GM12878 (cell line): ENCODE measurements at regions of chr19 and their contacts with region 1.

Region 1: GRCh38 chr19:13794757-13795589 is at the start of gene ZSWIM4:
- DNase-seq: peak; percentile 95
- ATAC-seq: peak; percentile 97
- H3K4me3 ChIP-seq: peak within 1 kb of the TSS; percentile 75
- H3K27ac ChIP-seq: peak within 1 kb of the TSS; percentile 84
- H3K4me1 ChIP-seq: peaks cover 16% of the 10 kb centered on the region
- H3K27me3 ChIP-seq: no peaks in the 10 kb centered on the region
- CTCF ChIP-seq: no peak
- EP300 ChIP-seq: no peak
- POLR2A ChIP-seq: peak; percentile 48
- RAD21 ChIP-seq: no peak
- polyA plus RNA-seq, gene ZSWIM4: not detected

Region 2: GRCh38 chr19:13784731-13785452 is 10.1 kb before region 1 on chr19:
- CTCF ChIA-PET with region 1: interaction called, 19 read pairs
- POLR2A ChIA-PET with region 1: interaction called, 7 read pairs
- RAD21 ChIA-PET with region 1: interaction called, 6 read pairs
- SMC1A ChIA-PET with region 1: interaction called, 27 read pairs
- in situ Hi-C with region 1: no loop called
- intact Hi-C with region 1: no loop called
- DNase-seq: no peak
- ATAC-seq: peak; percentile 91
- H3K4me3 ChIP-seq: no peak overlapping the region
- H3K27ac ChIP-seq: no peak overlapping the region
- H3K4me1 ChIP-seq: peaks cover 26% of the 10 kb centered on the region
- H3K27me3 ChIP-seq: no peaks in the 10 kb centered on the region
- CTCF ChIP-seq: peak; percentile 47 to 79 (median 74)
- EP300 ChIP-seq: no peak
- POLR2A ChIP-seq: no peak
- RAD21 ChIP-seq: peak; percentile 76

Region 3: DNA sequence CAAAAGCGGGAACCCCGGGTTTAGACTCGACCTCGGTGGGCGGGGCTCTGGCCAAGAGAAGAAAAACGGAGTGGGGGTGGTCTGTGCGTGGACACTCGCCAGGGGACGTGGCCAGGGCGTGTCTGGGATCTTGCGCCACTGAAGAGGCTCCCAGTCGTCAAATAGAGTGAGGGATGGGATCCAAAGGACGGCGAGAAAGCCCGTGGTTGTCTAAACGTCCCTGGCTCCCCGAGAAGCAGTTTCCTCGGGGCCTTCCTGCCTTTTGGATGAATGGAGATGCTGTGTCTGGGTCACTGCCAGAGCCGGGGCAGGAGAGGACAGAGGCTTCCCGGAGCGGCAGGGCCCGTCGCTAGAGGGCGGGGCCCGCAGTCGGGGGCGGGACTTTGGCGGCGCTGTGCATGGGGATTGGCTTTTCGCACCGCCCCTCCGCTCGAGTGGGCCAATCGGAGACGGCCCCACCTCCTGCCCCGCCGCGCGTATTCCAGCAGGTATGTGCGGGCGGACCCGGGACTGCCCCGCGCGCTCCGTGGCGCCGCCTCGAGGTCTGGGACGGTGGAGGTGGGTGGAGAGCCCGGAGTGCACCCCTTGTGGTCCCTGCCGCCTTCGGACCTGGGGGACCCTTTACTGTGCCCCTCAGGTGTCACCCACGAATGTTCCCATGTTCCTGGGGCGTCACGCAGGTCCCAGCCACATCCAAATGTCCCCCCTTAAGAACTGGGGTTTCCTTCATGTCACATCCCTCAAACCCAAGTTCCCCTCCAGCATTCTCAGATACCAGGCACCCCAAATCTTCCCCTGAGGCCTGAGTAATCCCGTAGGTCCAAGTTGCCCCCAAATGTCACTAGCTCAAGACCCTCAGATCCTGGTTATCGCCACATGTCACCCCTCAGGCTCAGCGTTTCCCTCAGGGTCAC is 38.6 kb after region 1 on chr19:
- CTCF ChIA-PET with region 1: interaction called, 6 read pairs
- POLR2A ChIA-PET with region 1: interaction called, 31 read pairs
- RAD21 ChIA-PET with region 1: interaction called, 8 read pairs
- SMC1A ChIA-PET with region 1: interaction called, 3 read pairs
- in situ Hi-C with region 1: no loop called
- intact Hi-C with region 1: loop called (anchors 5 kb)
- DNase-seq: no peak
- ATAC-seq: peak; percentile 90
- H3K4me3 ChIP-seq: peak overlapping the region; percentile 63; the same call in 1 of the 2 replicates
- H3K27ac ChIP-seq: peak overlapping the region; percentile 52
- H3K4me1 ChIP-seq: peaks cover 32% of the 10 kb centered on the region
- H3K27me3 ChIP-seq: no peaks in the 10 kb centered on the region
- CTCF ChIP-seq: peak; percentile 53 to 70 (median 60)
- EP300 ChIP-seq: no peak
- POLR2A ChIP-seq: peak; percentile 69
- RAD21 ChIP-seq: peak; percentile 32; the same call in 1 of the 2 replicates

Region 4: GRCh38 chr19:13839130-13839937 is 44.4 kb after region 1 on chr19:
- CTCF ChIA-PET with region 1: interaction called, 6 read pairs
- POLR2A ChIA-PET with region 1: interaction called, 31 read pairs
- RAD21 ChIA-PET with region 1: interaction called, 8 read pairs
- SMC1A ChIA-PET with region 1: interaction called, 4 read pairs
- in situ Hi-C with region 1: no loop called
- intact Hi-C with region 1: loop called (anchors 5 kb)
- DNase-seq: peak; percentile 69
- ATAC-seq: peak; percentile 66
- H3K4me3 ChIP-seq: peak overlapping the region; percentile 92
- H3K27ac ChIP-seq: peak overlapping the region; percentile 96
- H3K4me1 ChIP-seq: peaks cover 55% of the 10 kb centered on the region
- H3K27me3 ChIP-seq: no peaks in the 10 kb centered on the region
- CTCF ChIP-seq: 0 out of 6 replicates have a peak, but pooled peaks of 1 of the 3 experiments have one; percentile 8
- EP300 ChIP-seq: 0 out of 4 replicates have a peak, but pooled peaks of 1 of the 2 experiments have one; percentile 11
- POLR2A ChIP-seq: peak; percentile 89
- RAD21 ChIP-seq: no peak; the same call in 1 of the 2 replicates

Region 5: GRCh38 chr19:13846557-13847406 is 51.8 kb after region 1 on chr19:
- CTCF ChIA-PET with region 1: interaction called, 4 read pairs
- POLR2A ChIA-PET with region 1: interaction called, 20 read pairs
- RAD21 ChIA-PET with region 1: interaction called, 8 read pairs
- SMC1A ChIA-PET with region 1: interaction called, 5 read pairs
- in situ Hi-C with region 1: no loop called
- intact Hi-C with region 1: no loop called
- DNase-seq: peak; percentile 85
- ATAC-seq: peak; percentile 76
- H3K4me3 ChIP-seq: peak overlapping the region; percentile 64
- H3K27ac ChIP-seq: peak overlapping the region; percentile 91
- H3K4me1 ChIP-seq: peaks cover 41% of the 10 kb centered on the region
- H3K27me3 ChIP-seq: no peaks in the 10 kb centered on the region
- CTCF ChIP-seq: no peak
- EP300 ChIP-seq: peak; percentile 86 to 94
- POLR2A ChIP-seq: peak; percentile 72
- RAD21 ChIP-seq: no peak

Region 6: DNA sequence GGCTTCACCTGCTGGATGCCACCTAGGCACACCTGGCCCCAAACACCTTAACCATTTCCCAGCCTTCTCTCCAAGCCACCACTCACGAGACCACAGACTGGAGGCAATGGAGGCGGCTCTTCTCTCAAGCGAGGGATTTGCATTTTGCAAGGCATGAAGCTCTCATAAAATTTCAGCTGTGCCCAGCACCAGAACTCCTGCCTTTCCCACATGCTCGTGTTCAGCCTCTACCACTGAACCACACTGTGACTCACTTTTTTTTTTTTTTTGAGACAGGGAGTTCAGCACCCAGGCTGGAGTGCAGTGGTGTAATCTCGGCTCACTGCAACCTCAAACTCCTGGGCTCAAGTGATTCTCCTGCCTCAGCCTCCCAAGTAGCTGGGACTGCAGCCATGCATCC is 92.5 kb after region 1 on chr19:
- CTCF ChIA-PET with region 1: no interaction called
- POLR2A ChIA-PET with region 1: no interaction called
- RAD21 ChIA-PET with region 1: no interaction called
- SMC1A ChIA-PET with region 1: no interaction called
- in situ Hi-C with region 1: no loop called
- intact Hi-C with region 1: no loop called
- DNase-seq: no peak
- ATAC-seq: no peak
- H3K4me3 ChIP-seq: no peak overlapping the region
- H3K27ac ChIP-seq: no peak overlapping the region
- H3K4me1 ChIP-seq: peaks cover 1% of the 10 kb centered on the region
- H3K27me3 ChIP-seq: no peaks in the 10 kb centered on the region
- CTCF ChIP-seq: no peak
- EP300 ChIP-seq: no peak
- POLR2A ChIP-seq: no peak
- RAD21 ChIP-seq: no peak

Region 7: GRCh38 chr19:13926715-13927114 is 131.7 kb after region 1 on chr19:
- CTCF ChIA-PET with region 1: no interaction called
- POLR2A ChIA-PET with region 1: no interaction called
- RAD21 ChIA-PET with region 1: no interaction called
- SMC1A ChIA-PET with region 1: no interaction called
- in situ Hi-C with region 1: no loop called
- intact Hi-C with region 1: no loop called
- DNase-seq: no peak
- ATAC-seq: no peak
- H3K4me3 ChIP-seq: no peak overlapping the region
- H3K27ac ChIP-seq: no peak overlapping the region
- H3K4me1 ChIP-seq: no peaks in the 10 kb centered on the region
- H3K27me3 ChIP-seq: no peaks in the 10 kb centered on the region
- CTCF ChIP-seq: no peak
- EP300 ChIP-seq: no peak
- POLR2A ChIP-seq: no peak
- RAD21 ChIP-seq: no peak